GM12878 (cell line): ENCODE measurements at regions of chr3 and their contacts with region 1.

Region 1: DNA sequence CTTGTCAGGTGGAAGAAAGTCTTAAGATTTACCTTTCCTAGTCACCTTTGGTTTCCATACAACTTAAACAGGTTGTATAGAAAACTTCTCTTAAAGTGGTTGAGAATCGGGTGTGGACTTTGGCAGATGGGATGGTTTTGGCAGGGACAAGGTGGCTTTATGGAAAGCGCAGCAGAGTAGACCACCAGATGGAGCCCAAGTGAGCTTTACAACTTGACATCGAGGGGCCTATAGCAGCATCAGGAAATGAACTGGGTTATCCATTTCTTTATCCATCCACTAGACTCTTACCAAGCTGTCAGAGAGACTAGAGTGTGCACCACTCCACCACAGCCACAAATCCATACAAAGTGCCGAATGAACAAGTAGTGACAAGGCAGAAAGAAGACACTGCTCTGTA is 85.3 kb upstream of the MBNL1 start:
- DNase-seq: no peak
- ATAC-seq: peak; percentile 95
- H3K4me3 ChIP-seq: no peak overlapping the region
- H3K27ac ChIP-seq: no peak overlapping the region
- H3K4me1 ChIP-seq: no peaks in the 10 kb centered on the region
- H3K27me3 ChIP-seq: no peaks in the 10 kb centered on the region
- CTCF ChIP-seq: peak; percentile 63 to 67 (median 65)
- EP300 ChIP-seq: no peak
- POLR2A ChIP-seq: no peak
- RAD21 ChIP-seq: peak; percentile 70

Region 2: GRCh38 chr3:151168269-151169094 is 1015.0 kb before region 1 on chr3:
- CTCF ChIA-PET with region 1: no interaction called
- POLR2A ChIA-PET with region 1: no interaction called
- RAD21 ChIA-PET with region 1: no interaction called
- SMC1A ChIA-PET with region 1: no interaction called
- in situ Hi-C with region 1: no loop called
- intact Hi-C with region 1: no loop called
- DNase-seq: no peak
- ATAC-seq: peak; percentile 81
- H3K4me3 ChIP-seq: no peak overlapping the region
- H3K27ac ChIP-seq: no peak overlapping the region
- H3K4me1 ChIP-seq: peaks cover 21% of the 10 kb centered on the region
- H3K27me3 ChIP-seq: no peaks in the 10 kb centered on the region
- CTCF ChIP-seq: peak; percentile 78 to 92 (median 87)
- EP300 ChIP-seq: no peak
- POLR2A ChIP-seq: no peak
- RAD21 ChIP-seq: peak; percentile 90

Region 3: GRCh38 chr3:152199102-152199840 is 15.8 kb after region 1 on chr3:
- CTCF ChIA-PET with region 1: interaction called, 20 read pairs
- POLR2A ChIA-PET with region 1: interaction called, 3 read pairs
- RAD21 ChIA-PET with region 1: interaction called, 17 read pairs
- SMC1A ChIA-PET with region 1: interaction called, 21 read pairs
- in situ Hi-C with region 1: no loop called
- intact Hi-C with region 1: no loop called
- DNase-seq: no peak
- ATAC-seq: peak; percentile 14
- H3K4me3 ChIP-seq: peak overlapping the region; percentile 26
- H3K27ac ChIP-seq: peak overlapping the region; percentile 85
- H3K4me1 ChIP-seq: peaks cover 31% of the 10 kb centered on the region
- H3K27me3 ChIP-seq: no peaks in the 10 kb centered on the region
- CTCF ChIP-seq: peak in 1 of 3 experiments; percentile 4; a peak in 1 of 6 replicates
- EP300 ChIP-seq: peak in 1 of 2 experiments; percentile 32; a peak in 1 of 4 replicates
- POLR2A ChIP-seq: no peak
- RAD21 ChIP-seq: no peak

Region 4: GRCh38 chr3:152241142-152242017 is 57.9 kb after region 1 on chr3:
- CTCF ChIA-PET with region 1: interaction called, 26 read pairs
- POLR2A ChIA-PET with region 1: no interaction called
- RAD21 ChIA-PET with region 1: interaction called, 9 read pairs
- SMC1A ChIA-PET with region 1: interaction called, 33 read pairs
- in situ Hi-C with region 1: no loop called
- intact Hi-C with region 1: no loop called
- DNase-seq: no peak
- ATAC-seq: peak; percentile 69
- H3K4me3 ChIP-seq: no peak overlapping the region
- H3K27ac ChIP-seq: peak overlapping the region; percentile 91
- H3K4me1 ChIP-seq: peaks cover 27% of the 10 kb centered on the region
- H3K27me3 ChIP-seq: no peaks in the 10 kb centered on the region
- CTCF ChIP-seq: no peak
- EP300 ChIP-seq: no peak
- POLR2A ChIP-seq: no peak
- RAD21 ChIP-seq: no peak

Region 5: GRCh38 chr3:152281133-152281713 is 97.8 kb after region 1 on chr3:
- CTCF ChIA-PET with region 1: interaction called, 28 read pairs
- POLR2A ChIA-PET with region 1: no interaction called
- RAD21 ChIA-PET with region 1: interaction called, 13 read pairs
- SMC1A ChIA-PET with region 1: interaction called, 83 read pairs
- in situ Hi-C with region 1: no loop called
- intact Hi-C with region 1: no loop called
- DNase-seq: no peak
- ATAC-seq: peak; percentile 68
- H3K4me3 ChIP-seq: peak overlapping the region; percentile 33; the same call in 1 of the 2 replicates
- H3K27ac ChIP-seq: peak overlapping the region; percentile 64
- H3K4me1 ChIP-seq: peaks cover 43% of the 10 kb centered on the region
- H3K27me3 ChIP-seq: no peaks in the 10 kb centered on the region
- CTCF ChIP-seq: no peak
- EP300 ChIP-seq: no peak
- POLR2A ChIP-seq: no peak
- RAD21 ChIP-seq: no peak

Region 6: GRCh38 chr3:152328841-152329240 is 145.4 kb after region 1 on chr3:
- CTCF ChIA-PET with region 1: interaction called, 17 read pairs
- POLR2A ChIA-PET with region 1: no interaction called
- RAD21 ChIA-PET with region 1: interaction called, 12 read pairs
- SMC1A ChIA-PET with region 1: interaction called, 8 read pairs
- in situ Hi-C with region 1: no loop called
- intact Hi-C with region 1: no loop called
- DNase-seq: no peak
- ATAC-seq: no peak
- H3K4me3 ChIP-seq: no peak overlapping the region
- H3K27ac ChIP-seq: no peak overlapping the region; the same call in 1 of the 2 replicates
- H3K4me1 ChIP-seq: peaks cover 24% of the 10 kb centered on the region
- H3K27me3 ChIP-seq: no peaks in the 10 kb centered on the region
- CTCF ChIP-seq: no peak
- EP300 ChIP-seq: no peak
- POLR2A ChIP-seq: no peak
- RAD21 ChIP-seq: no peak

Region 7: GRCh38 chr3:152385761-152386160 is 202.3 kb after region 1 on chr3:
- CTCF ChIA-PET with region 1: interaction called, 4 read pairs
- POLR2A ChIA-PET with region 1: no interaction called
- RAD21 ChIA-PET with region 1: no interaction called
- SMC1A ChIA-PET with region 1: interaction called, 12 read pairs
- in situ Hi-C with region 1: no loop called
- intact Hi-C with region 1: no loop called
- DNase-seq: no peak
- ATAC-seq: no peak
- H3K4me3 ChIP-seq: no peak overlapping the region
- H3K27ac ChIP-seq: peak overlapping the region; percentile 13; the same call in 1 of the 2 replicates
- H3K4me1 ChIP-seq: peaks cover 6% of the 10 kb centered on the region; the same call in 1 of the 2 replicates
- H3K27me3 ChIP-seq: no peaks in the 10 kb centered on the region
- CTCF ChIP-seq: no peak
- EP300 ChIP-seq: no peak
- POLR2A ChIP-seq: no peak
- RAD21 ChIP-seq: no peak

Region 8: DNA sequence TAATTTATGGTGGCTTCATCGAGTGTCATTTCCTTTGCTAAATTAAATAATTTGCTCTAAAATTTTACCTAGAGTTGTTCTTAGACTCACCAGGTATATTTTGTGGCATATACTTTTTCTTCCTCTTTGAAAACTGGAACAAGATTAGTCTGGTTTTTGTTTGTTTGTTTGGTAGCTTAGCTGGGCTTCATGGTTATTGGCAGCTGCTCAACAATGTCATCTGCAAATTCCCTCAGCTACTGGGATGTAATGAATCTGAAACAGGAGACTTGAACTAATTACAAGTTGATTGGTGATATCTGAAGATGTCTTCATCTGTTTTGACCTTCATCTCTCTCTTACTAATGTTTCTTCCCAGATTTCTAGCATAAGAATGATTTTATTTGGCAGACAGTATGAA is 381.0 kb after region 1 on chr3:
- CTCF ChIA-PET with region 1: no interaction called
- POLR2A ChIA-PET with region 1: no interaction called
- RAD21 ChIA-PET with region 1: no interaction called
- SMC1A ChIA-PET with region 1: no interaction called
- in situ Hi-C with region 1: no loop called
- intact Hi-C with region 1: no loop called
- DNase-seq: no peak
- ATAC-seq: no peak
- H3K4me3 ChIP-seq: no peak overlapping the region
- H3K27ac ChIP-seq: no peak overlapping the region
- H3K4me1 ChIP-seq: no peaks in the 10 kb centered on the region
- H3K27me3 ChIP-seq: no peaks in the 10 kb centered on the region
- CTCF ChIP-seq: no peak
- EP300 ChIP-seq: no peak
- POLR2A ChIP-seq: no peak
- RAD21 ChIP-seq: no peak